Activated T-helper 1 cell treated with anti-CD3 and anti-CD28 coated beads, Interleukin-12 subunit alpha, Interleukin-12 subunit beta, Interleukin-2, Interleukin-4 antibody, amounts not matched to agents 30 ng/mL and 10 ng/mL and 1 ng/mL, durations not matched to agents 14 hours and 24 hours and 36 hours (primary cell): ENCODE measurements at regions of chr11 and their contacts with region 1.

Region 1: GRCh38 chr11:76626921-76627401 is 43.6 kb downstream of the LRRC32 start:
- DNase-seq: peak; percentile 72
- H3K4me3 Mint-ChIP-seq: peak overlapping the region; percentile 20
- H3K27ac Mint-ChIP-seq: peak overlapping the region; percentile 92
- H3K4me1 Mint-ChIP-seq: peaks cover 44% of the 10 kb centered on the region
- H3K27me3 Mint-ChIP-seq: peaks cover 8% of the 10 kb centered on the region

Region 2: GRCh38 chr11:76235233-76236091 is 391.5 kb before region 1 on chr11:
- intact Hi-C with region 1: loop called (anchors 2 kb)
- DNase-seq: peak; percentile 85
- H3K4me3 Mint-ChIP-seq: peak overlapping the region; percentile 92
- H3K27ac Mint-ChIP-seq: peak overlapping the region; percentile 84
- H3K4me1 Mint-ChIP-seq: peaks cover 50% of the 10 kb centered on the region
- H3K27me3 Mint-ChIP-seq: peaks cover 30% of the 10 kb centered on the region

Region 3: DNA sequence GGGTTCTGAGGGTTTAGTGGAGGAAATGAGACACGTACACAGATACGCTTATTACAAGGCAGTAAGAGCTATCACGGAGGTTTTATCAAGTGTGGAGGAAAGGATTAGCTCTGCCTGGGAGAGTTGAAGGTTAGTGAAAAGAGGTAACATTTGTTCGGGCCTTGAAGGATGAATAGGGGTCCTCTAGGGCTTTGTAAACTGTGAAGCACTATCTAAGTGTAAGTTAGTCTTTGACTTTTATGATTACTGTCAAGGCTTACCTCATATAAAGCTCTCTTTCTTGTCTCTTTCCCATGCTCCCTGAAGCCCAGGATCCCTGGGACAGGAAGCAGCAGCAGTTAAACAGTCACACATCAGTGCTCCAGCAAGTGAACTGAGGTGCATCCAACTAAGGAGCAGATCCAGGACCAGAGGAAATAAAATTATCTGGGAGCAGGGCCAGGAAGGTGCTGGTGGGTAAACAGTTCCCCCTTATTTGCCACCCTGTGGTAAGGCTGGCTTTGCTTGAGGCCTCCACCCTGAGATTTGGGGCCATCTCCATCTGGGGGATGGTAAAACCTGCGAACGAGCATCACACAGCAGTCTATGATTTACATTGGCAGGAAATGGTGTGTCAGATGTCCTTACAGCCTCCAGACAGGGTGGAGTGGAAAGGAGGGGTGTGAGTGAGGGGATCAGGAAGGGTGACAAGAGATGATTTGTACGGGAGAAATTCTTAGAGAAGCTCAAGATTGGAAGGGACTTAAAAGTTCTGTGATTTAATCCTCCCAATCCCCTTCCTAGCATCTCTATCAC is 218.6 kb before region 1 on chr11:
- intact Hi-C with region 1: no loop called
- DNase-seq: no peak
- H3K4me3 Mint-ChIP-seq: no peak overlapping the region
- H3K27ac Mint-ChIP-seq: no peak overlapping the region
- H3K4me1 Mint-ChIP-seq: peaks cover 6% of the 10 kb centered on the region
- H3K27me3 Mint-ChIP-seq: peaks cover 8% of the 10 kb centered on the region

Region 4: GRCh38 chr11:76588455-76589325 is 38.3 kb before region 1 on chr11:
- intact Hi-C with region 1: loop called (anchors 1 kb)
- DNase-seq: peak; percentile 43
- H3K4me3 Mint-ChIP-seq: peak overlapping the region; percentile 5
- H3K27ac Mint-ChIP-seq: peak overlapping the region; percentile 83
- H3K4me1 Mint-ChIP-seq: peaks cover 73% of the 10 kb centered on the region
- H3K27me3 Mint-ChIP-seq: peaks cover 2% of the 10 kb centered on the region

Region 5: DNA sequence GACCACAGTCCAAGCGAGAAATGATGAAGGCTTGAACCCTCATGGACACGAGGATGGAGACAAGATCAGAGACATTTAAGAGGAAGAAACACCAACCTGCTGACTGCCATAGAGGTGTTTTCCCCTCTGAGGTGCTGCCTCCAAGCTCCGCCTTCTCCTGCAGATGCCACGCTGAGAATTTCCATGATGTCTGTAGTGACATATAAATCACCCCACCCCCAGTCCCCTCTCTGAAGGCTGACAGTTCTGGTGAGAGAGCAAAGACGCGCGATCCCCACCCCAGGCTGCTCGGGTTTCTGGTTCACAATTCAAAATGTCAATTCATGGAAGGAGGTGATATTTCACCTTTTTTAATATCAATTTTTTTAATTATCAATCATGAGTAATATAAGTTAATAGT is 15.4 kb after region 1 on chr11:
- intact Hi-C with region 1: loop called (anchors 2 kb)
- DNase-seq: no peak
- H3K4me3 Mint-ChIP-seq: no peak overlapping the region
- H3K27ac Mint-ChIP-seq: peak overlapping the region; percentile 13
- H3K4me1 Mint-ChIP-seq: peaks cover 7% of the 10 kb centered on the region
- H3K27me3 Mint-ChIP-seq: peaks cover 34% of the 10 kb centered on the region

Region 6: GRCh38 chr11:76670485-76671236 is 43.7 kb after region 1 on chr11 and contains the start of gene LRRC32:
- intact Hi-C with region 1: loop called (anchors 1 kb)
- DNase-seq: no peak
- H3K4me3 Mint-ChIP-seq: peak within 1 kb of the TSS; percentile 77
- H3K27ac Mint-ChIP-seq: peak within 1 kb of the TSS; percentile 15
- H3K4me1 Mint-ChIP-seq: peaks cover 31% of the 10 kb centered on the region
- H3K27me3 Mint-ChIP-seq: peaks cover 12% of the 10 kb centered on the region
- total RNA-seq, gene LRRC32: 5.5 and 5.7 TPM in 2 replicates